ENCODE measurements at regions of chr14 and their contacts with region 1.

Region 1: GRCh38 chr14:73553845-73554244 is 4.9 kb downstream of the HEATR4 start:
- DNase-seq: no peak
- H3K4me3 Mint-ChIP-seq: no peak overlapping the region
- H3K27ac Mint-ChIP-seq: no peak overlapping the region
- H3K4me1 Mint-ChIP-seq: no peaks in the 10 kb centered on the region
- H3K27me3 Mint-ChIP-seq: peaks cover 2% of the 10 kb centered on the region

Region 2: GRCh38 chr14:73472185-73473114 is 81.4 kb before region 1 on chr14:
- intact Hi-C with region 1: no loop called
- DNase-seq: peak; percentile 77
- H3K4me3 Mint-ChIP-seq: no peak overlapping the region
- H3K27ac Mint-ChIP-seq: no peak overlapping the region
- H3K4me1 Mint-ChIP-seq: peaks cover 19% of the 10 kb centered on the region
- H3K27me3 Mint-ChIP-seq: peaks cover 4% of the 10 kb centered on the region

Region 3: GRCh38 chr14:73526569-73526968 is 27.3 kb before region 1 on chr14:
- intact Hi-C with region 1: loop called (anchors 2 kb)
- DNase-seq: no peak
- H3K4me3 Mint-ChIP-seq: no peak overlapping the region
- H3K27ac Mint-ChIP-seq: no peak overlapping the region
- H3K4me1 Mint-ChIP-seq: no peaks in the 10 kb centered on the region
- H3K27me3 Mint-ChIP-seq: peaks cover 2% of the 10 kb centered on the region

Region 4: GRCh38 chr14:73610687-73611086 is 56.8 kb after region 1 on chr14:
- intact Hi-C with region 1: no loop called
- DNase-seq: no peak
- H3K4me3 Mint-ChIP-seq: no peak overlapping the region
- H3K27ac Mint-ChIP-seq: no peak overlapping the region
- H3K4me1 Mint-ChIP-seq: peaks cover 8% of the 10 kb centered on the region
- H3K27me3 Mint-ChIP-seq: peaks cover 8% of the 10 kb centered on the region

Measured in activated CD4-positive, alpha-beta T cell treated with anti-CD3 and anti-CD28 coated beads, Interleukin-2, amount 10 ng/mL, durations not matched to agents 24 days and 14 days (primary cell).